Common myeloid progenitor, CD34-positive (primary cell): ENCODE measurements at regions of chr9 and their contacts with region 1.

Region 1: GRCh38 chr9:131656356-131657036 is 83.4 kb downstream of the RAPGEF1 start:
- DNase-seq: peak; percentile 100
- H3K4me3 ChIP-seq: peak overlapping the region in 4 of 7 experiments; percentile 6 to 57 (median 42)
- H3K27ac ChIP-seq: peak overlapping the region; percentile 13 to 67
- H3K4me1 ChIP-seq: peaks cover 13 to 59% (median 47%) of the 10 kb centered on the region in 4 experiments
- H3K27me3 ChIP-seq: no peaks in the 10 kb centered on the region

Region 2: DNA sequence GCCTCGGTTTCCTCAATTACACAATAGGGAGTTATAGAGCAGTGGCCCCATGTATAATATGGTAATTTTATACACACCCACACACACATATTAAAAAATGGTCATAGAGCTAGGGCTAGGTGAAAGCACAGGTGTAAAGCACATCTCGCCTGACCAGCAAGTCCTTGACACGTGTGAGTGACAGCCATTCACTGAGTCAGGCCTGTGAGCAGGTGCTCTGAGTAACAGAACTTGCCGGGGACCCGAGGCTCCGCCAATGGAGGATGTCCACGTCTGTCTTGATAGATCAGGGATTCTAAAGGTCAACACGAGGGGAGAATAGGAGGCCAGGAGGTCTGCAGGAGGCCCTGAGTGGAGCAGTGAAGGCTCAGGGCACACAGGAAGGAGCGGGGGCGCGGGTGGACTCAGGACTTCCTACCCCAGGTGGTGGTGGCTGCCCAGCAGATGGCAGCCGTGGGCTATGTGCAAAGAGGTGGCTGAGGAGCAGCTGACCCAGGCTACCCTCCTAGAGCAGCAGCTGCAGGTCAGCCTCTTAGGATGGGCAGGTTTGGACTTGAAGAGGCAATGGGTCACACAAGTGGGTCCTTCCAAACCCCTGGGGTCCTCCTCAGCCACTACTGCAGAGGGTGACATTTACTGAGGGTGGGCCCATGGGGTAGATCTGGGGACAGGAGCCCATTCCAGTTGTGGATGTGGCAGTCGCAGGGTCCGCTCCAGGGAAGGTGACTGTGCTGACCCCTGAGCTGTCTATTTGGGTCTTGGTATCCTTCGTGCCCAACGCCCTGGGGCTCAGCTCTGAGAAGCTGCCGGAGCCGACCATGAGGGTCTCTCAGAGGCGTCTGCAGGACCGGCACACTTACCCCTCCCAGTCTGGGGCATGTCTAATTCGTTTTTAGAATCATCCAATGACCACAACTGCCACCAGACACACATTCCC is 65.3 kb before region 1 on chr9:
- CTCF ChIA-PET with region 1: interaction called, 11 read pairs
- POLR2A ChIA-PET with region 1: interaction called, 3 read pairs
- DNase-seq: peak; percentile 69 to 78 (median 77)
- H3K4me3 ChIP-seq: peak overlapping the region in 4 of 7 experiments; percentile 6 to 50 (median 19)
- H3K27ac ChIP-seq: no peak overlapping the region
- H3K4me1 ChIP-seq: peaks cover 3 to 24% (median 18%) of the 10 kb centered on the region in 4 experiments
- H3K27me3 ChIP-seq: no peaks in the 10 kb centered on the region

Region 3: GRCh38 chr9:131635285-131635684 is 21.2 kb before region 1 on chr9:
- CTCF ChIA-PET with region 1: interaction called, 11 read pairs
- POLR2A ChIA-PET with region 1: interaction called, 3 read pairs
- DNase-seq: peak; percentile 91 to 96 (median 96)
- H3K4me3 ChIP-seq: no peak overlapping the region
- H3K27ac ChIP-seq: peak overlapping the region in 1 of 2 experiments; percentile 69
- H3K4me1 ChIP-seq: peaks cover 7 to 26% (median 14%) of the 10 kb centered on the region in 4 experiments
- H3K27me3 ChIP-seq: no peaks in the 10 kb centered on the region

Region 4: DNA sequence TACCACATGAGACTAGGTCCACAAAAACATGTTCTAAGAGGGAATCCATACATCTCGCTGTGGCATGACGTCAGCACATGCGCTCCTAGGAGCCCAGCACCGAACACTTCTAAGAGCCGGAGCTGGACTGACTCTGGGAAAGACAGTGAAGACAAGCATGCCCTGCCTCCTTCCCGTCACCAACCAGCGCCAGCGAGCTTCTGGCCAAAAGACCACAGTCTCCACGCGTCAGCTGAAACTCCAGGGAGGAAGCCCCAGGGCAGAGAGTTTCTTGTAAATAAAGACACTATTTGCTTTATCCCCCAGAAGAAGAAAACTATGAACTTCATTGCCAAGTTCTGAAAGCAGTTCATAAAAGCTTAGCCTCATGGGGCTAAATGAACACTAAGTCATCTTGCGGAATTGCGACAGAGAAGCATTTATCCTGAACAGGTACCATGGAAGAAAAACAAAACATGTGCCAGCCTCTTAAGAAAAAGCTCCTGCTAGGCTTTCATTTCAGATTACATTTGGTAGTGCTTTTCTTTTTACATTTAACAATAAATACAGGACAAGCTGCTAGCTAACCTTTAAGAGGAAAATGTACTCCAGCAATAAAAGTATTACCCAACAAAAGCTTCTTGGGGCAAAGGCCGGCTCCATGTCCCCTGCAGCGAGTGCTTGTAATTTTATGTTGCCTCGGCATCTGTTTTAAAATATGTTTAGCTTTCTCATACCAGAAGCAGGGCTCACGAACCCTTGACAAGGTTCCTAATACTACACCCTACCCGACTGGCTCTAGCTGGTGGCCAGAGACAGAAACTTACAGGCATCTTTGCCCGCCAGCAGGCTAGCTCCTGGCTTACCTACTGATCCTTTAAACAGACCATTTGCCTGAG is 14.6 kb before region 1 on chr9:
- CTCF ChIA-PET with region 1: interaction called, 15 read pairs
- POLR2A ChIA-PET with region 1: interaction called, 3 read pairs
- DNase-seq: no peak
- H3K4me3 ChIP-seq: no peak overlapping the region
- H3K27ac ChIP-seq: no peak overlapping the region
- H3K4me1 ChIP-seq: no peaks in the 10 kb centered on the region
- H3K27me3 ChIP-seq: no peaks in the 10 kb centered on the region

Region 5: DNA sequence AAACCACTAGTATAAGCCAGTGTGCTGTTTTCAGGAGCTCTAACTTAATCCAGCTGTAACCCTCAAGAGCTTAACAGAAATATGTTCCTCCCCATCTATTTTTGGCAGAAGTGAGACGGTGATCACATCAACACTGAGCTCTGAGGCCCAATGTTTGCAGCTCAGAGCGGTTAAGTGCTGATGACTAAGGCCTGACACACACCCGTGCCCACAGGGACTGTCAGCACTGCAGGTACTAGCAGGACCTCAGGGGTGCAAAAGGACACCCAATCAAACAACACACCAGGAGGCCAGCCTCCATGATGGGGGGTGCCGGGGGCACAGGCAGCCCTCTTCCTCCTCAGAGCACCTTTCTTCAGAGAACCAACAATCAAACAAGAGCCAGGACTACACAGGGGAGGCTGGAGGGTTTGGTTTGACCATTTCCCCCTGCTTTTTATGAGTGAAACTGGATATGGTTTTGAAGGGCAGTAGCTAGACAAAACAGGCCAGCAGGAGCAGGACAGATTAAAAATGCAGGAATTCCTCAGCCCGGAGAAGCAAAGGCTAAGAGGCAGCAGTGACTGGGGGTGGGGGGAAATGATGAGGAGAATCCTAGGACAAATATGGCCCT is 22.1 kb after region 1 on chr9:
- CTCF ChIA-PET with region 1: interaction called, 10 read pairs
- POLR2A ChIA-PET with region 1: interaction called, 4 read pairs
- DNase-seq: peak in 2 of 3 donors; percentile 58 to 60
- H3K4me3 ChIP-seq: no peak overlapping the region
- H3K27ac ChIP-seq: no peak overlapping the region
- H3K4me1 ChIP-seq: peaks cover 27 to 63% (median 47%) of the 10 kb centered on the region in 4 experiments
- H3K27me3 ChIP-seq: no peaks in the 10 kb centered on the region

Region 6: DNA sequence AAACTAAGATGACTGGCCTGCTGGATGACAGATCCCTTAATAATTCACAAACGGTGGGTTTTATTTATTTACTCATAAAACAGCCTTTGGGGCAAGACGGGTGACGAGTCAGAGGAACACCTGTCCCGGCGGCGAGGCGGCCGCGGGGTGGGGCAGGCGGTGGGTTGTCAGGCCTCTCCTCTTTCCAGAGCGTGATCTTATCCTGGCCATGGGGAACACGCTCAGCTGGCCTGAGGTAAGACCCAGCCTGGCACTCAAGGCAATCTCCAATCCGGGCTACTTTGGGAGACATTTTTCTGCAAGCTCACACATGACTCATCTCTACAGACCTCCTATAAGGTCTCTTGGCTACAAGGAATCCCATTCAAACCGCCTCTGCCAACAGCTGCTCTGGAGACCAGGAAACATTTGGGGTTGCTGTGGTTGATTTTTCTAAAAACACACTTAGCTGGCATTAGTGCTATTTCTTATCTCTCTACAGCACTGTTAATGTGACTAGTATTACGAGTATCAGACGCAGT is 77.1 kb after region 1 on chr9:
- CTCF ChIA-PET with region 1: interaction called, 7 read pairs
- POLR2A ChIA-PET with region 1: interaction called, 18 read pairs
- DNase-seq: peak; percentile 94 to 99 (median 99)
- H3K4me3 ChIP-seq: peak overlapping the region in 5 of 7 experiments; percentile 37 to 68 (median 56)
- H3K27ac ChIP-seq: peak overlapping the region; percentile 75 to 82
- H3K4me1 ChIP-seq: peaks cover 51 to 91% (median 87%) of the 10 kb centered on the region in 4 experiments
- H3K27me3 ChIP-seq: no peaks in the 10 kb centered on the region